A549 (cell line): ENCODE measurements at regions of chr20 and their contacts with region 1.

Region 1: GRCh38 chr20:56974499-56975236 is 291.8 kb downstream of the BMP7 start:
- DNase-seq: peak; percentile 64 to 81
- ATAC-seq: peak; percentile 87 to 91
- H3K4me3 ChIP-seq: no peak overlapping the region
- H3K27ac ChIP-seq: peak overlapping the region; percentile 47 to 66; a peak in 4 of 6 replicates
- H3K4me1 ChIP-seq: peaks cover 12% of the 10 kb centered on the region
- CTCF ChIP-seq: peak; percentile 88
- EP300 ChIP-seq: no peak
- POLR2A ChIP-seq: no peak
- RAD21 ChIP-seq: peak; percentile 95 to 98

Region 2: DNA sequence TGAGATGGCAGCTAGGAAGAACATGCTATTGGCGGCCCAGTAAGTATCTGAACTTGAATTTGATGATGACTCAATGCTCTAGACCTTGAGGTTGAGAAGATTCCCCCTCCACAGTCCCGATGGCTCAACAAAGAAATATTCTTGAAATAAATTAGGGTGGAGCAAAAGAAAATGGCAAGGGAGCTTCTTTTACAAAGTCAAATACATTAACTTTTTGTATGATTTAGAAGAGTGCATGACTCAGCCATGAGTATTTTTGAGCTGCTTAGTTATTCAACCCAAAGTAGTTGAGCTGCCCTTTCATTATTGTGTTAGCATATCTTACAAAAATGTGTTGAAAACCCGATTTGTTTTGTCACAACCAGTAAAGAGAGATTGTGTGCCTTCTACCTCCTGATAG is 338.0 kb before region 1 on chr20:
- CTCF ChIA-PET with region 1: interaction called, 121 read pairs
- POLR2A ChIA-PET with region 1: no interaction called
- DNase-seq: peak in 1 of 2 experiments; percentile 18
- ATAC-seq: peak in 1 of 2 experiments; percentile 34; a peak in 2 of 6 replicates
- H3K4me3 ChIP-seq: no peak overlapping the region
- H3K27ac ChIP-seq: 0 out of 6 replicates have a peak overlapping the region, but pooled peaks of 1 of the 2 experiments have one; percentile 29
- H3K4me1 ChIP-seq: peaks cover 46% of the 10 kb centered on the region
- CTCF ChIP-seq: no peak
- EP300 ChIP-seq: no peak
- POLR2A ChIP-seq: no peak
- RAD21 ChIP-seq: no peak

Region 3: DNA sequence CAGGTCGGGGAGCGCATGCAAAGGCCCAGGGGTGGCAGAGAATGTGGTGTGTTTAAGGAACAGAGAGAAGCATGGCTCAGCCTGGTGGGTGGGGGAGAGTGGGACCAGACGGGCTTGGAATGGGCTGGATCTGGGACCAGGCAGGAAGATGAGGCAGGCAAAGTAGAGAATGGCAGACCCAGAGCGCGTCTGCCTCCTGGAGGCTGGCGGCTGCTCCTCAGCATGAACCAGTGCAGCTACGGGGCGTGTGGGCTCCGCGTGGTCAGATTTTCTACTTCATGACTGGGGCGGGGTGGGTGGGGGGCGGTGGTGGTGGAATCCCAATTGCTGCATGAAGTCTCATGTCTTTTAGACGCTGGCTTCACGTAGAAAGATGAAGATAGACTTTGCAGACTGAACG is 210.0 kb before region 1 on chr20:
- CTCF ChIA-PET with region 1: no interaction called
- POLR2A ChIA-PET with region 1: no interaction called
- DNase-seq: no peak
- ATAC-seq: no peak
- H3K4me3 ChIP-seq: no peak overlapping the region
- H3K27ac ChIP-seq: no peak overlapping the region
- H3K4me1 ChIP-seq: no peaks in the 10 kb centered on the region; the same call in 2 of the 3 replicates
- CTCF ChIP-seq: no peak
- EP300 ChIP-seq: no peak
- POLR2A ChIP-seq: no peak
- RAD21 ChIP-seq: no peak

Region 4: DNA sequence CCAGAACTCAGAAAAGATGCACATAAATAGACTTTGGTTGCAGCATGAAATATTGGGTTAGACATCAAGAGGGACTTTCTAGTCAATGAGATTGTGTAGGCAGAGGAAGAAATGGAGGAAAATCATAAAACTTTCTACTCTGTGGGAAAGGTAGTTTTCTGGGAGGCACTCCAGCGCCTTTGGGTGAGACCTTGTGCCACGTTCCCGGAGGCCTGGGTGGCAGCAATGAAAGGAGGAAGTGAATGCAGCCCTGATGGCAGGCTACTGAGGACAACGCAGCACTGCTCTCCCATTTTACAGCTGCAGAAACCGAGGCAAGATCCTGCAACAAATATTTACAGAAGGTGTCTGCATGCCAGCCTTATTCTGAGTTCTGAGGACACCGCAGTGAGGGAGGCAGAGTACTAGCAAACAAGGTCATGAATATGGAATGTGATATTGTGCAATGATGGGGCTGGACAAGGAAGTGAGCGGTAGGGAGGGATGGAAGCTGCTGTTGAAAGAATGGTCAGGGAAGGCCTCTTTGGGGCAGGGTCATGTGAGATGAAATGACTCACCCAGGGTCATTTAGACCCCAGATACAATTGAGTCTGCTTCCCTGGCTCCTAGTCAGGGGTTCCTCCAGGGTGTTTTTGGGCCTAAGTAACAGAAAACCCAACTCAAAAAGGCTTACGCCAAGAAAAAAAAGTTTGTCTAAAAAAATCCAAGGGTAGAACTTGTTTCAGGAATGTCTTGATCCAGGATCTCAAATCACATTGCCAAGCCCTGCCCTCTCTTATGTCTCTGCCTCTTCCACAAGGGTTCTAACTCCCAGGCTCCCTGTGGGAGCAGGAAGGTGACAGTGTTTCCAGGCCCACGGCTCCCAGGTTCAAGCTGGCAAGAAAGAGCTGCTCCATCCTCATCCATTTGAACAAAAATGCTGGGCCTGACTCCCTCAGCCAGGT is 186.4 kb before region 1 on chr20:
- CTCF ChIA-PET with region 1: interaction called, 13 read pairs
- POLR2A ChIA-PET with region 1: no interaction called
- DNase-seq: peak; percentile 86 to 100
- ATAC-seq: peak; percentile 89 to 96
- H3K4me3 ChIP-seq: peak overlapping the region; percentile 29; the same call in 2 of the 3 replicates
- H3K27ac ChIP-seq: peak overlapping the region; percentile 96 to 97
- H3K4me1 ChIP-seq: peaks cover 69% of the 10 kb centered on the region
- CTCF ChIP-seq: no peak
- EP300 ChIP-seq: peak; percentile 95 to 97; a peak in 4 of 5 replicates
- POLR2A ChIP-seq: no peak
- RAD21 ChIP-seq: peak; percentile 30 to 42; a peak in 4 of 5 replicates

Region 5: DNA sequence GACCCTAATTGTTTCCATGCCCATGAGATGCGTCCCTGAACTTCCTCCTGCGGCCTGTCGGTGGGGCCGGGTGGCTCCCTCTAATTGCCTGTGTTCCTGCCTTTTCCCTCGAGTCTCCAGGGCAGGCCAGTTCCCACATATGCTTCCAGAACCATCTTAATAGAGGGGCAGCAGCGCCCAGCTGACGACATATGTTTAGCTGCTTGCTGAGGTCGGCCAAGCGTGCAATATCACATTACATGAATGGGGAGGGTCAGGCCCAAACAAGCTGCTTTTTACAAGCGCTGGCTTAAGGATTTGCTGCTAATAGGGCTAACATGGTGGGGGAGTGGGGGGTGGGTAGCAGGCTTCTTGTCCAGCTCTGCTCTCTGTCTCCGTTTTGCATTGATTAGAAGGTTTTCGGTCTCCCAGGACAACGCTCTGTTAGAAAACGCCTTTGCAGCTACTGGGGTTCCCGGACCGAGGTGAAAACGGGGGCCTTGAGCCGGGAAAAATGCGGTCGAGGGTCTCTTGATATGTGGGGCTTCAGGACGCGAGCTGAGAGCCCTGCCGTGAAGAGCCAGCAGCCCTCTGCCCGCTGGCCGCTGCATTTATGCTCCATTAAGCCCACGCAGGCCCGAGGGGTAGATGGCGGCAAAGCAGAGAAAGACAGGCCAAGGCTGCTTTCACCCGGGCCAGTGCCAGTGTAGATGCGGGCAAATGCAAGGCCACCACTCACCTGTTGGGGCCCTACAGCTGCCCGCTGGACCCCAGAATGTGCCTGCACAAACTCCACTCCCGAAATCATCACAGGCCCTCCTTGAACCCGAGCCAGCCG is 16.7 kb before region 1 on chr20:
- CTCF ChIA-PET with region 1: interaction called, 44 read pairs
- POLR2A ChIA-PET with region 1: no interaction called
- DNase-seq: no peak
- ATAC-seq: no peak
- H3K4me3 ChIP-seq: no peak overlapping the region
- H3K27ac ChIP-seq: no peak overlapping the region
- H3K4me1 ChIP-seq: peaks cover 6% of the 10 kb centered on the region
- CTCF ChIP-seq: no peak
- EP300 ChIP-seq: no peak
- POLR2A ChIP-seq: no peak
- RAD21 ChIP-seq: no peak

Region 6: GRCh38 chr20:56985286-56985685 is 10.6 kb after region 1 on chr20:
- CTCF ChIA-PET with region 1: interaction called, 35 read pairs
- POLR2A ChIA-PET with region 1: no interaction called
- DNase-seq: no peak
- ATAC-seq: no peak
- H3K4me3 ChIP-seq: no peak overlapping the region
- H3K27ac ChIP-seq: no peak overlapping the region
- H3K4me1 ChIP-seq: no peaks in the 10 kb centered on the region
- CTCF ChIP-seq: no peak
- EP300 ChIP-seq: no peak
- POLR2A ChIP-seq: no peak
- RAD21 ChIP-seq: no peak

Region 7: DNA sequence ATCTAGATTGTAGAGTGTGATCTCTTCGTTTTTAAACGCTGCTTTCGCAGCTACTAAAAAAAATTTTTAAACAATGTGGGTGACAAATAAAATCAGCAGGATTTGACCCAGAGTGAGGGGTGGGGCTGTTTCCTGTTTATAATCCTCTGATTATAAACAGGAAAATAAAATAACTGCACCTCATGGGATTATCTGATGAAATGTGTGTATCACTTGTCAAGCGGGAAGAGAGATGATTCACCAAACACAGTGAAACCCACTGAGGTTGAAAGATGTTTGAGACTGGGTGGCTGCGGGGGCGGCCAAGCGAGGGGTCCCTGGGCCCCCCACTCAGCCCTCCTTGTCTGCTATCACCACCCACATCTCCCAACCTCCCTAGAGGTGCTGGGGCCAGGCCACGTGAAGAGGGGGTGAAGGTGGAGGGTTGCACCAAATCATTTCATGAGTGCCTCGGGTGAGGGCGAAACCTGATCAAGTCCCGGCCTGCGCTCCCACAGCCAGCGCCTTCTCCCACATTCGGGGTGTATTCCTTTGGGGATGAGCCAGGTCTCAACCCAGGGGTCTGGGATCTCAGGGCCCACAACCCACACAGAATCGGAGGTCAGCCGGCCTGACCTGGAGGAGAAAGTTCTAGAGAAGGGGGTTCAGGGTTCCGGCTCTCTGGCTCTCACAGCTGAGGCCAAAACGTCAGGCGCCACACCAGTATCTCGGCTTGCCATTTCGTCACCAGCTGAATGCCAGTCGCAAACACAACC is 79.3 kb after region 1 on chr20:
- CTCF ChIA-PET with region 1: no interaction called
- POLR2A ChIA-PET with region 1: no interaction called
- DNase-seq: no peak
- ATAC-seq: no peak
- H3K4me3 ChIP-seq: no peak overlapping the region
- H3K27ac ChIP-seq: no peak overlapping the region
- H3K4me1 ChIP-seq: peaks cover 6% of the 10 kb centered on the region; the same call in 1 of the 3 replicates
- CTCF ChIP-seq: no peak
- EP300 ChIP-seq: no peak
- POLR2A ChIP-seq: no peak
- RAD21 ChIP-seq: no peak

Region 8: DNA sequence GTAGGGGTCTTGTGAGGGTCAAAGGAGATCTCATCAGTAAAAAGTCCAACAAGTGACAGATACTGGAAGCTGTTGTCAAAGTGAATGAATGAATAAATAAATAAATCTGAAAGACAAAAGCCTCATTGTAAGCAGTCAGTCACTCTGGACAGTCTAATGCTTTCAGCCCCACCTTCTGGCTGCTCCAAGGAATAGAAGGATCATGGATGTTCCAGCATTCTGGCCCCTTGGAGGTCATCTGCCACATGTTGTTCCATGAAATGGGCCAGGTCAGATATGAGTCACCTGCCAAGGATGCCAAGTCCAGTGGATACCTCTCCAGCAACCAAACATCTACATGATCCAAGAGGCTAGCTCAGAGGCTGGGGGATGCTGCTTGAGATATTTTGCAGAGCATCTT is 106.1 kb after region 1 on chr20:
- CTCF ChIA-PET with region 1: no interaction called
- POLR2A ChIA-PET with region 1: no interaction called
- DNase-seq: peak in 1 of 2 experiments; percentile 33
- ATAC-seq: peak in 1 of 2 experiments; percentile 58; a peak in 3 of 6 replicates
- H3K4me3 ChIP-seq: no peak overlapping the region
- H3K27ac ChIP-seq: no peak overlapping the region
- H3K4me1 ChIP-seq: no peaks in the 10 kb centered on the region
- CTCF ChIP-seq: no peak
- EP300 ChIP-seq: no peak
- POLR2A ChIP-seq: no peak
- RAD21 ChIP-seq: peak; percentile 22 to 31; a peak in 2 of 5 replicates